HAP-1 (cell line): ENCODE measurements at regions of chr1 and their contacts with region 1.

Region 1: GRCh38 chr1:197620714-197621163 is 154.5 kb downstream of the DENND1B start:
- DNase-seq: no peak
- H3K4me3 ChIP-seq: no peak overlapping the region
- H3K4me1 ChIP-seq: peaks cover 18% of the 10 kb centered on the region
- H3K27me3 ChIP-seq: no peaks in the 10 kb centered on the region

Region 2: DNA sequence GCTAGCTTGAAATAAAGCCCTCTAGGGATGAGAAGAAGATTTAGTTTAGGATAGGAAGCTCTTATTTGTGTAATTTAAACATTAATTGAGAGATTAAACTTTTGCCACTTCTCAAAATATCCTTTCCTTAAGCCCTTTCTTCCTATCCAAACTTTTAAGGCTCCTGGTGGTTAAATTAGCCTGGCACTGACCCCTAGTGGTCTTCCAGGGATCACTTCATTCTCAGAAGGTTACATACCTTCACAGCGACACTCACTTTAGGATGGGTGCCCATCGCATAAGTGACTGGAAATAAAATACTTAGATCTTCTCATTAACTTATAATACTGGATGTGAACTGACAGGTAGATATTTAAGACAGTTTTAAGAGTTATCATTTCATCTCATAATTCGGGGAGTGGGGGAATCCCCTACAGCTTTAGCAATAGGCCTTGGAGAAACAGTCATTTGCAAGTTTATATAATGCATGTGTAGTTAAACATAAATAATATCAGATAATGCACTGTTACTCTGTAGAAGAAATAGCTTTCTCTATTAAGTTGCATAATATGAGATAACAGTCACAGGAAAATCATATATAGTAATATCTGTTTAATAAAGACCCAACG is 303.9 kb after region 1 on chr1:
- in situ Hi-C with region 1: loop called (anchors 5 kb)
- DNase-seq: peak; percentile 72 to 76
- H3K4me3 ChIP-seq: no peak overlapping the region
- H3K4me1 ChIP-seq: peaks cover 4% of the 10 kb centered on the region; the same call in 1 of the 2 replicates
- H3K27me3 ChIP-seq: no peaks in the 10 kb centered on the region